Heart right ventricle (tissue), 16 donors: ENCODE measurements at regions of chr12 and their contacts with region 1.

Region 1: DNA sequence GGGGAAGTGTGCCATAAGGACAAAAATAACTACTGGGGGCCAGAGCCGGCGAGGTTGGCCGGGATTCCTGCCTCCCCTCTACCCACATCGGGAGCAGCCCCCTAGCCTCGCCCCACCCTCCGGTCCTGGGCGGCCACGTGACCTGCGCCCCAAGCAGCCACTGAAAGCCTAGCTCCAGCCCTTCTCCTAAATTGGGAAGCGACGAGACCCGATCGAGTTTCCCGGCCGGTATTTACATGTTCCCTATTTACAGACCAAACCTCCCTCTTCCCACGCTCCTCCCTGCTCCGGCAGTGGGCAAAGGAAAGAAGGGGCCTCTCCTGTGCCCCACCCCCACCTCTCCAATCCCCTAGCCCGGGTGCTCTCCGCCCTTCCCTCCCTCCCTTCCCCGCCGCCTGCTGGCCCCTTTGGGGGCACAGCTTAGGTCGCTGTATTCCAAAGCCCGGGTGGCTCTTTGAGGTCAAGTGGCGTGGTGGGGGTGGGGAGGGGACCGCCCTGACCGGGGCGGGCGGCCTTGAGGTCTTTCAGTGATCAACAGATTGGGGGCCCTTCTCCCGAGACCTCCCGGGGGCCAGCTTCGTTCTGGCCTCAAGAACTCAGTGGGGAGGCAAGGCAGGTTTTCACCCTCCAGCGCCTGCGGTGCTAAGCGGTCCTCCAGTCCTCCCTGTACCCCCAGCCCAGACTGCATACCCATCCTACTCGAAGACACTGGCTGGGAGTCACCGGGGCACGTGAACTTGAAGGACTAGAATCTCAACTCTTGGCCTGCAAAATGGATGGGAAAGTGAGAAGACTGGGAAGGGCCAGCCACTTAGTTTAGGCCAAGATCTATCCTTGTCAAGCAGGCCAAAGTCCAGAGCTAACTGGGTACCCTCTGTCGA is 6.3 kb upstream of the CTDSP2 start:
- DNase-seq: peak; percentile 55 to 78
- ATAC-seq: peak; percentile 78 to 89 (median 84)
- H3K4me3 ChIP-seq: peak overlapping the region in 9 of 10 donors; percentile 30 to 59 (median 50)
- H3K27ac ChIP-seq: peak overlapping the region; percentile 32 to 91 (median 86)
- H3K4me1 ChIP-seq: peaks cover 0 to 51% (median 33%) of the 10 kb centered on the region in 9 donors
- H3K27me3 ChIP-seq: peaks cover 0 to 18% (median 0%) of the 10 kb centered on the region in 7 donors
- CTCF ChIP-seq: peak in 4 of 9 donors; percentile 15 to 45 (median 42)

Region 2: DNA sequence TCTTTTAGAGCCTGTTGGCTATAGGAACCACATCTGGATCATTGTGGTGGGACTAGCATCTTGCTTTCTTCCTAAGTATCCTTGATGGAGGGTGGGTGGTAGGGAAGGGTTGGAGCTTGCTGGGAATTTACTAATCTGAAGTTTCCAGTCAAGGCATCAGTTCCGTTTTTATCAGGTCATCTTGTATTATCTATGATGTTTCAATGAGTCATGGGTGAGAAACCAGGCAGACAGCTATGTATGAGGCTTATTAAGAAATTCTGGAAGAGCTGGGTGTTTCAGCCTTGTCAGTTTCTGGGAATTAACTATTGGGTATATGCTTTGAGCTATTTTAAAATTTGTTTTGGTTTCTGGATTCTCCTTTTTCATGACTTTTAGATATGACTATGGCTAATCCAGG is 58.9 kb before region 1 on chr12:
- intact Hi-C with region 1: loop called in 1 of 10 experiments (anchors 2 kb)
- DNase-seq: no peak
- ATAC-seq: peak in 1 of 8 donors; percentile 42
- H3K4me3 ChIP-seq: no peak overlapping the region
- H3K27ac ChIP-seq: peak overlapping the region in 1 of 10 donors; percentile 67
- H3K4me1 ChIP-seq: peaks cover 0 to 26% (median 0%) of the 10 kb centered on the region in 9 donors
- H3K27me3 ChIP-seq: no peaks in the 10 kb centered on the region
- CTCF ChIP-seq: no peak